ENCODE measurements at regions of chrX and their contacts with region 1.

Region 1: GRCh38 chrX:7147978-7148824 is at the start of gene PUDP:
- DNase-seq: peak; percentile 90
- H3K4me3 Mint-ChIP-seq: peak within 1 kb of the TSS; percentile 67
- H3K27ac Mint-ChIP-seq: peak within 1 kb of the TSS; percentile 39
- H3K4me1 Mint-ChIP-seq: peaks cover 24% of the 10 kb centered on the region
- H3K27me3 Mint-ChIP-seq: no peaks in the 10 kb centered on the region
- CTCF ChIP-seq: no peak
- total RNA-seq, gene PUDP: 30.6 and 36.6 TPM in 2 replicates

Region 2: GRCh38 chrX:7019545-7019944 is 128.7 kb before region 1 on chrX:
- CTCF ChIA-PET with region 1: no interaction called
- intact Hi-C with region 1: no loop called
- DNase-seq: no peak
- H3K4me3 Mint-ChIP-seq: no peak overlapping the region
- H3K27ac Mint-ChIP-seq: no peak overlapping the region
- H3K4me1 Mint-ChIP-seq: no peaks in the 10 kb centered on the region
- H3K27me3 Mint-ChIP-seq: no peaks in the 10 kb centered on the region
- CTCF ChIP-seq: no peak

Region 3: DNA sequence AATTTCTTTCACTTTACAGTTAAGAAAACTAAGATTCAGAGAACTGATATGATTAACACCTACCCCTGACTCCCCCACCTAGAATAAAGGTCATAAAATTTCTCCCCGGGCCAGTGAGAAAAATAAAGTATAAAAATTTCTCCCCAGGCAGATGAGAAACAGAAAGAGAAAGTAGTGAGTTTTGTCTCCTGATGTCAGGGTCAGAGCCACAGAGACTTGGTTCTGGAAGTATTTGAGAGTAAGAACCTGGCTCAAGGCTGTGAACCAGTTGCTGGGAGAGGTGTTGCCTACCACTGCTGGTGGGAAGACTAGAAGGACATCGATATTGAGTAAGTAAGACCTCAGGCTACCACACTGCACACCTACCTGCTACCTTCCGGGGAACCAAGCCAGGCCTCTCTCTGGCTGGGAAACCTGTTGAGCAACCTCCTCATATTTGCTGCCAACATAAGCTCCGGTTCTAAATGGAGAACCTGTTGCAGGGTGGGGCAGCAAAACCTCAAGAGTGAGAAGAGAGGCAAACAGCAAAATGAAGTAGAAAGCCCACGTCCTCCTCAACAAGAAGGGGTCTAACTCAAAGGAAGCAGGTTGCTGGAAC is 103.9 kb after region 1 on chrX:
- CTCF ChIA-PET with region 1: no interaction called
- intact Hi-C with region 1: loop called (anchors 5 kb)
- DNase-seq: peak; percentile 61
- H3K4me3 Mint-ChIP-seq: no peak overlapping the region
- H3K27ac Mint-ChIP-seq: peak overlapping the region; percentile 70
- H3K4me1 Mint-ChIP-seq: peaks cover 7% of the 10 kb centered on the region
- H3K27me3 Mint-ChIP-seq: no peaks in the 10 kb centered on the region
- CTCF ChIP-seq: no peak

Measured in Calu3 (cell line).